Left cardiac atrium (tissue), 4 donors: ENCODE measurements at regions of chr3 and their contacts with region 1.

Region 1: DNA sequence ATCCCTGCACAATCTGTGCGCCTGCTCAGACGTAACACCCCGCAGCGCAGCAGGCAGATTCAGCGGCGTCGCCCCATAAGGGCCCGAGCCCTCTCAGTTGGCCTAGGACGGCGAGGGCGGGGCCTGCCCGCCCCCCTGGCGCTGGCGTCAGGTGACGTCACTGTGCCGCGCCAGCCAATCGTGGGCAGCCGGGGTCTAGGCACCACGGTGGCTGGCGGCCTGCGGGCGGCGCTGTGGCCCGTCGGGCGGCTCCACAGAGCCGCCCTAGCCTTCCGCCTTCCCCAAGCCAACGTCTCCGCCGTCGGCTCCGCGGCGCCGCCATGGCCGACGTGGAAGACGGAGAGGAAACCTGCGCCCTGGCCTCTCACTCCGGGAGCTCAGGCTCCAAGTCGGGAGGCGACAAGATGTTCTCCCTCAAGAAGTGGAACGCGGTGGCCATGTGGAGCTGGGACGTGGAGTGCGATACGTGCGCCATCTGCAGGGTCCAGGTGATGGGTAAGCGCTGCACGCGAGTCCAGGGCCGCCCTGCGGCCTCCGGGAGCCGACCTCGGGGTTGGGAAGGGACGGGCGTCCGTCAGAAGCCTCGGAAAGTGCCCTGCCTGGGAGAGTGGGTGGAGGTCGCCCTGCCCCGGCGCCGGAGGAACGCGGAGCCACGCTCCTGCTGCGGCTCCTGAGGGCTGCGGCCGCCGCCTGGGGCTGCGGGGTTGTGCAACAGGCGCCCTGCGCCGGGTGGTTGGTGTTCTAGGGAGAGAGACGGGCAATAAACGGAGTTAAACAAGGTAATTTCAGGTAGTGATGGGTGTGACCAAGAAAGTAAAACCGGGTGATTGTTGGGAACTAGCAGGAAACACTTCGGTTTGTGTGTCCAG is at the start of gene RNF7:
- DNase-seq: peak; percentile 95
- ATAC-seq: peak; percentile 98
- total RNA-seq, gene RNF7: 70.2 to 76.0 TPM

Region 2: DNA sequence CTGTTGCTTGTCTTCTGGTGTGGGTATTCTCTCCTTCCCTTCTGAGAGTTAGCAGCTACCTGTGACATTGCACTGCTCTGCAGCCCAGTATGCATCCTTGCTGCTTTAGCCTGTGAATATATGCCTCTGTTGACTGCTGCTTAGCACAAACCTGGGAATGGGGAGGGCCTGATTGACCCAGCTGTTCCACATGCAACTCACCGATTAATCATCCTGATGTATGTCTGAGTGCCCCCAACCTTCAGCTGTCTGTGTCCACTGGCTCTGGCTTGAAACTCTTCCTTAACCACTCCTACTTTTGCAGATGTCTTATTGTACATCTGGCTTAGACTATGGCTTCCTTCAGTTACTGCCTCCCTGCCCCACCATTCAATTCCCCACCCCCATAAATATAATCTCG is 132.4 kb before region 1 on chr3:
- intact Hi-C with region 1: loop called in 1 of 2 experiments (anchors 10 kb)
- DNase-seq: no peak
- ATAC-seq: no peak

Region 3: DNA sequence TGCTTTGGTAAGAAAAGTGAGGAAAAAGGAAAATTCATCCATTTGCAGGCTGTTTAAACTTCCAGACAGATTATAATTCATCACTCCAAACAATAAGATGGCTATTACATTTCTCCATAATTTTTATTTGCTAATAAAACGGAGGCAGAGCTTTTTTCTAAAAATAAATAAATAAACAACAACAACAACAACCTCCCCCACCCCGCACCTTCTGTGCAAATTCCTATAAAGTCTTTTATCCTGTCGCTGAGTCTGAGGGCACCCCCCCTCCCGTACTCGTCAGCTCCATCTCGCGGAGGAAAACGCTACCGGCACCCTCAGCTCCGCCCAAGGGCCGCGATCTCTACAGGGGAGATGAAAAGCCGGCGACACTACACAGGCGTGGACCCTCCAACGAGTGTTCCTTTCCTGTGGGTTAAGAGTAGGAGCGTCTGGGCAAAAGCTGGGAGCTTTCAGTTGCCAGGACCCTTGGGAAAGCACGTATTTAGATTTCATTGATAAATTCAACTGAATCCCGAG is 137.2 kb after region 1 on chr3:
- intact Hi-C with region 1: loop called (anchors 1 to 5 kb)
- DNase-seq: peak; percentile 88
- ATAC-seq: peak; percentile 84 to 89

Region 4: GRCh38 chr3:141913150-141913811 is 175.0 kb after region 1 on chr3:
- intact Hi-C with region 1: loop called in 1 of 2 experiments (anchors 1 kb)
- DNase-seq: no peak
- ATAC-seq: peak; percentile 50 to 69